MCF 10A (cell line): ENCODE measurements at regions of chr12 and their contacts with region 1.

Region 1: DNA sequence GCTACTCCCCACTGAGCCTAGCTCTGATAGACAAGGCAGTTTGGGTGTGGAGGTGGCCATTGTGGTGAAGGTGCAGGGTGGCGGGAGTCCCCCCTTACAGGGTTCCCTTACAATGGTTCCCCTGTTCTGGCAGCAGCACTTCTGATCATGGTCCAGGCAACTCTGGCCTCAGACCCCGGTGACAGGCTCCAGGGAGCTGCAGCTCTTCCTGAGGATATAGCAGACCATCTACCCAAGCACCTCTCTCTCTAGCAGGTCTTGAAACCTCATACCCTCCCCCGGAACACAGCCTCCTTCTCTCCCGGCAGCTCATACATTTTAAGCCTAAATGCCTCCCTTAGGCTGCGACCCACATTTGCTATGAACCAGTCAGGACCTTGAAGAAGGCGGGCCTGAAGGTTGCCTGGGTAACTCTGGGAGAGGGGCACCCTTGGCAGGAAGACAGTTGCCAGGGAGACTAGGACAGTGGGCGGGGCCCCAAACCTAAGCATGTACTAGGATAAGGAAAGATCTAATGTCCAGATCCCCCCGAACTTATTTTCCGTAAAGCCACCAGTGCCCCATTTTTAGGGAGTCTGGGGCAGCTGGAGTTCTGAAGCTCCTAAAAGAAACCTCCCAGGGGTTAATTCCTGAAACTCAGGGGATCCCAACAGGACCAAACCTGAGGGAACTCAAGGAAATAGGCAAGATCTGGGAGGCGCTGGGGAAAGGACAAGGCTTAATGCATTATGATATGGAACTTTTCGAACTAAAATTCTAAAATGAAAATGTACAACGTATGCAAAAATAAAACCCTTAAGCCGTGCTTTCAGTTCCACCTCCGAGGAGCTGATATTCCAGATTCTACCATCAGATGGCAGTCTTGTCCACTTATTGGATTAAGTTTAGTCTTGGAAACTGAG is 4.5 kb upstream of the GDF11 start:
- DNase-seq: peak; percentile 86
- H3K4me3 Mint-ChIP-seq: peak overlapping the region; percentile 74
- H3K27ac Mint-ChIP-seq: peak overlapping the region; percentile 73
- H3K4me1 Mint-ChIP-seq: peaks cover 38% of the 10 kb centered on the region
- H3K27me3 Mint-ChIP-seq: peaks cover 17% of the 10 kb centered on the region
- CTCF ChIP-seq: peak; percentile 78

Region 2: DNA sequence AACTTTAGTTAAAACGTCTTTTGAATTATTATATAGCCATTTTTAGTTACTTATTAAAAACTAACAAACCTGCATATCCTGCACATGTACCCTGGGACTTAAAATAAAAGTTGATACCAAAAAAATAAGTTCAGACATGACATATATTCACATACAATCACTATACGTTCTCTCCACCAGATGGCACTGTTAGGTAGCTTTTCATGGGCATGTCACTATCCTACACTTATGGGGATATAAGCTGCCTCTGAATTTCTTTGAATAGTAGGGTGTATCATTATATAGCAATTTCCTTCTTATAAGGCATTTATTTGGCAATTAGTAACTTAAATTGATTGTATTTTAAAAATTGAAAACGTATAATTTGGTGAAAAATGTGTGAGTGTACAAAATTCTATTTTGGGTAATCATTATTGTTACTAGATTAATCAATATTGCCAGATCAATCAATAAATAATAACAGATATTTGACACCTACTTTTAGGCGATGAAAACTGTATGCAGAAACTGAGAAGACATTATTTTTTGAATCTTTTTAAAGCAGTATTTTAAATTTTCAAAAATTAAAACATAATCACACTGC is 549.3 kb before region 1 on chr12:
- CTCF ChIA-PET with region 1: no interaction called
- POLR2A ChIA-PET with region 1: no interaction called
- intact Hi-C with region 1: loop called (anchors 5 kb)
- DNase-seq: peak; percentile 79
- H3K4me3 Mint-ChIP-seq: no peak overlapping the region
- H3K27ac Mint-ChIP-seq: no peak overlapping the region
- H3K4me1 Mint-ChIP-seq: no peaks in the 10 kb centered on the region
- H3K27me3 Mint-ChIP-seq: peaks cover 71% of the 10 kb centered on the region
- CTCF ChIP-seq: peak; percentile 47

Region 3: DNA sequence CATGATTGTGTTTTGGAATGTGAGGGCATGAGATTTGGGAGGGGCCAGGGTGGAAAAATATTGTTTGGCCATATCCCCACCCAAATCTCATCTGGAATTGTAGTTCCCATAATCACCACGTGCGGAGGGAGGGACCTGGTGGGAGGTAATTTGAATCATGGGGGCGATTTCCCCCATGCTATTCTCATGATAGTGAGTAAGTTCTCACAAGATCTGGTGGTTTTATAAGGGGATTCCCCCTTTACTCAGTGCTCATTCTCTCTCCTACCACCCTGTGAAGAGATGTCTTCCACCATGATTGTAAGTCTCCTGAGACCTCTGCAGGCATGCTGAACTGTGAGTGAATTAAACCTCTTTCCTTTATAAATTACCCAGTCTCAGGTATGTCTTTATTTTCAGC is 86.0 kb before region 1 on chr12:
- CTCF ChIA-PET with region 1: no interaction called
- POLR2A ChIA-PET with region 1: no interaction called
- intact Hi-C with region 1: no loop called
- DNase-seq: no peak
- H3K4me3 Mint-ChIP-seq: no peak overlapping the region
- H3K27ac Mint-ChIP-seq: no peak overlapping the region
- H3K4me1 Mint-ChIP-seq: no peaks in the 10 kb centered on the region
- H3K27me3 Mint-ChIP-seq: peaks cover 12% of the 10 kb centered on the region
- CTCF ChIP-seq: no peak

Region 4: DNA sequence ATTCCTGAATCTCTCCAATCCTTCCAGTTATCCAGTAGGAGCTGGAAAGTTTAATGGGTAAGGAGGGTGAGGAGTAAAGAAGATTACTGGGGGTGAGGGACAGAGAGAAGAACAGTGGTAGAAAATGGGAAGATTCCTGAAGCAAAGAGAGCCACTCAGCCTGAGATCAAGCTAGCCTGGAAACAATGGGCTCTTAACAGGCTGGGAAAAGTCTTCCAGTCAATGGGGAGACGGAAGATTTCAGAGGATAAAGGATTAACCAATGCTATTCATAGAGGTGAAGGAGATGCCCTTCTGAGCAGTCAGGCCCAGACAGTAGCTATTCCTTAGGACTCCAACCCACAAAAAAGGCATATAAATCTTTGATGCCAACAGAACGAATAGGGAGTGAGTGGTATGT is 19.3 kb after region 1 on chr12:
- CTCF ChIA-PET with region 1: interaction called, 30 read pairs
- POLR2A ChIA-PET with region 1: interaction called, 7 read pairs
- intact Hi-C with region 1: no loop called
- DNase-seq: no peak
- H3K4me3 Mint-ChIP-seq: no peak overlapping the region
- H3K27ac Mint-ChIP-seq: no peak overlapping the region
- H3K4me1 Mint-ChIP-seq: peaks cover 6% of the 10 kb centered on the region
- H3K27me3 Mint-ChIP-seq: no peaks in the 10 kb centered on the region
- CTCF ChIP-seq: no peak

Region 5: GRCh38 chr12:55806982-55807381 is 68.6 kb after region 1 on chr12:
- CTCF ChIA-PET with region 1: interaction called, 14 read pairs
- POLR2A ChIA-PET with region 1: interaction called, 3 read pairs
- intact Hi-C with region 1: no loop called
- DNase-seq: no peak
- H3K4me3 Mint-ChIP-seq: no peak overlapping the region
- H3K27ac Mint-ChIP-seq: no peak overlapping the region
- H3K4me1 Mint-ChIP-seq: peaks cover 7% of the 10 kb centered on the region
- H3K27me3 Mint-ChIP-seq: no peaks in the 10 kb centered on the region
- CTCF ChIP-seq: no peak

Region 6: GRCh38 chr12:55931780-55932550 is 193.6 kb after region 1 on chr12:
- CTCF ChIA-PET with region 1: interaction called, 11 read pairs
- POLR2A ChIA-PET with region 1: interaction called, 10 read pairs
- intact Hi-C with region 1: no loop called
- DNase-seq: no peak
- H3K4me3 Mint-ChIP-seq: peak overlapping the region; percentile 79
- H3K27ac Mint-ChIP-seq: peak overlapping the region; percentile 89
- H3K4me1 Mint-ChIP-seq: peaks cover 47% of the 10 kb centered on the region
- H3K27me3 Mint-ChIP-seq: no peaks in the 10 kb centered on the region
- CTCF ChIP-seq: no peak

Region 7: DNA sequence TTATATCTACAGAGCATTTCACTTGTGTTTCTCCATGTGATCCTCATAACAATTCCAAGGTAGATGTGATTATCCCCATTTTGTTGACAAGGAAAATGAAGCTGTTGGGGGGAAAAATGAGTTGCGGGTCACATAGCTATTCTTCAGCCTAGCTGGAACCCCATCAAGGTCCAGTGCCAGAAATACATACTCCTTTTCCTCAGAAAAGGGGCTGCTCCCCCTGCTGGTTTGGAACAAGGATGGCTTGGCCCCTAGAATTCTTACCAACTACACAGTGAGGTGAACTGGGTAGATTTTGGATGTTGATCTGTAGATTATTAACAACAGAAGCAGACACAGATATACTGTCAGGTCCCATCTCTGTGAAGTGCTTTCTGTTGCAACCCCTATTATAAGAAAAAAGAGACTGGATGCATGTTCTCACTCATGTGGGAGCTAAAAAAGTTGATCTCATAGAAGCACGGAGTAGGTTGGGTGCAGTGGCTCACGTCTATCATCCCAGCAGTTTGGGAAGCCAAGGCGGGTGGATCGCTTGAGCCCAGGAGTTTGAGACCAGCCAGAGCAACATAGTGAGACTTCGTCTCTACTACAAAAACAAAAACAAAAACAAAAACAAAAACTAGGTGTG is 291.4 kb after region 1 on chr12:
- CTCF ChIA-PET with region 1: interaction called, 20 read pairs
- POLR2A ChIA-PET with region 1: no interaction called
- intact Hi-C with region 1: loop called (anchors 1 kb)
- DNase-seq: peak; percentile 69
- H3K4me3 Mint-ChIP-seq: no peak overlapping the region
- H3K27ac Mint-ChIP-seq: no peak overlapping the region
- H3K4me1 Mint-ChIP-seq: peaks cover 11% of the 10 kb centered on the region
- H3K27me3 Mint-ChIP-seq: no peaks in the 10 kb centered on the region
- CTCF ChIP-seq: peak; percentile 68

Region 8: GRCh38 chr12:56189176-56189917 is 451.0 kb after region 1 on chr12 and contains the start of gene SMARCC2:
- CTCF ChIA-PET with region 1: interaction called, 7 read pairs
- POLR2A ChIA-PET with region 1: no interaction called
- intact Hi-C with region 1: loop called (anchors 10 kb)
- DNase-seq: peak; percentile 87
- H3K4me3 Mint-ChIP-seq: peak within 1 kb of the TSS; percentile 85
- H3K27ac Mint-ChIP-seq: peak within 1 kb of the TSS; percentile 93
- H3K4me1 Mint-ChIP-seq: peaks cover 38% of the 10 kb centered on the region
- H3K27me3 Mint-ChIP-seq: no peaks in the 10 kb centered on the region
- CTCF ChIP-seq: peak; percentile 75
- total RNA-seq, gene SMARCC2: 52.1 and 57.0 TPM in 2 replicates